MCF 10A (cell line): ENCODE measurements at regions of chr3 and their contacts with region 1.

Region 1: DNA sequence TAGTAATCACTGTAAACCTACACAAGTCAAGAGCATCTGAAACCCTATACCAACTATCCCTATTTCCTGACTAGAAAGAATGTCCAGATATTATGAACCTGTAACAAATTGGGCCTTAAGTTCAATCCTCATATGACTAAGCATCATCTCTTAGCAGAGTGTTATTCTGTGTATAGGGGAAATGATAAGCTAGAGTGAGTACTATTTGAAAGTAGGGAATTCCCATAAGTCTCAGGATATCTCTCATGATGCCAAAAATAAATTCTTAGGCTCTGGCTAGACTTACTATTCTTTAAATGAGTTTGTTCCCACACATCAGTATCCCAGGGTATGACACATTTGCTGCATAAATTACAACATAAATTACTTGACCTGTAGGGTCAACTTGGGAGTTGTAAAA is 15.3 kb downstream of the MRPL47 start:
- DNase-seq: no peak
- H3K4me3 Mint-ChIP-seq: no peak overlapping the region
- H3K27ac Mint-ChIP-seq: no peak overlapping the region
- H3K4me1 Mint-ChIP-seq: no peaks in the 10 kb centered on the region
- H3K27me3 Mint-ChIP-seq: no peaks in the 10 kb centered on the region
- CTCF ChIP-seq: no peak

Region 2: DNA sequence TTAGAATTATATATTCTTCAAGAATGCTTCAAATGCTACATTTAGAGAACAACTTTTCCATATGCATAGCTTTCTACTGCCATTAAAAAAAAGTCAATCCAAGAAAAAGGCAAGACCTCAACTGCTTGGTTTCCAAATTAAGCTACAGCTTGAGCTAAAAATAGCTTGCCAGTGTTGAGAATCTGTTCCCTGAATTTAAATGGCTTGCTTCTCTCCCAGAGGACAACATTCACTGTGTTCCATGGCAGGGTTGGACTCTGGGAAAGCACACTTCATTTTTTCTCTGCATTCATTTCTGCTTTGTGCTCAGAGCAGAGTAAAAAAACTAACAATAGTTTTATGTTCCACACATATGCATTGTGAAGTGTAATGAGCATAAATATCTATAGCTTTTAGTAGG is 76.8 kb before region 1 on chr3:
- CTCF ChIA-PET with region 1: no interaction called
- POLR2A ChIA-PET with region 1: no interaction called
- intact Hi-C with region 1: no loop called
- DNase-seq: no peak
- H3K4me3 Mint-ChIP-seq: no peak overlapping the region
- H3K27ac Mint-ChIP-seq: no peak overlapping the region
- H3K4me1 Mint-ChIP-seq: no peaks in the 10 kb centered on the region
- H3K27me3 Mint-ChIP-seq: peaks cover 8% of the 10 kb centered on the region
- CTCF ChIP-seq: no peak

Region 3: DNA sequence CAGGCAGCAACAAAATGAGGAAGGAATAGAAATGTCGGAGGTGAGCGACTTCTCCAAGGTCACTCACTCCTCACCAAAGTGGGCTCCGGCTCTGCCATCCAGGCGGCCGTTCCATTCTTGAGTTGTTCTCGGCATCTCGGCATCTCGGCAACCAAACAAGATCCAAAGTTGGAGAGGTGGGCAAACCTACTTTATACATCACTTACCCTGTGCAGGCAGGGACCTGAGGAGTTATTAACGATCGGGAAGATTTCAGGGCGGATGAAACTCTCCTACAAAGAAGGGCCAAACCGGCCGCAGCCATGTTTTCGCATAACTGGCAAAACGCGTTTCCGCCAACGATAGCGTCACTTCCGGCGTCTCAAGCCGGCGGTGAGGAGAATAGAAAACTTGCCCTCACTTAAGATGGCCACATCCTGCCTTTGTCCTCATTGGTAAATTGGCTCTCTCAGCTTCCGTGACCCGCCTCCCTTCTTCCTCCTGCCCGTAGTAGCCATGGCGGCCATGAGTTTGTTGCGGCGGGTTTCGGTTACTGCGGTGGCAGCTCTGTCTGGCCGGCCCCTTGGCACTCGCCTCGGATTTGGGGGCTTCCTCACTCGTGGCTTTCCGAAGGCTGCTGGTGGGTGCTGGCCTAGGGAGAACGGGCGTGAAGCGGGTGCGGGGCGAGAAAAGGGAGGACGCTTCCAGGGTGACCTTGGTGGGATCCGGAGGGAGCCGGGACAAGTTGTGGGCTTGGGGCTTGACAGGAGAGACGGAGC is 15.4 kb after region 1 on chr3 and contains the starts of genes MRPL47 and NDUFB5:
- CTCF ChIA-PET with region 1: no interaction called
- POLR2A ChIA-PET with region 1: interaction called, 15 read pairs
- intact Hi-C with region 1: no loop called
- DNase-seq: peak; percentile 97
- H3K4me3 Mint-ChIP-seq: peak within 1 kb of the TSS; percentile 100
- H3K27ac Mint-ChIP-seq: peak within 1 kb of the TSS; percentile 100
- H3K4me1 Mint-ChIP-seq: peaks cover 9% of the 10 kb centered on the region
- H3K27me3 Mint-ChIP-seq: no peaks in the 10 kb centered on the region
- CTCF ChIP-seq: no peak
- total RNA-seq, gene MRPL47: 58.3 and 63.4 TPM in 2 replicates
- total RNA-seq, gene NDUFB5: 88.2 and 115 TPM in 2 replicates